Activated CD4-positive, alpha-beta memory T cell treated with anti-CD3 and anti-CD28 coated beads for 36 hours (primary cell): ENCODE measurements at regions of chr12 and their contacts with region 1.

Region 1: DNA sequence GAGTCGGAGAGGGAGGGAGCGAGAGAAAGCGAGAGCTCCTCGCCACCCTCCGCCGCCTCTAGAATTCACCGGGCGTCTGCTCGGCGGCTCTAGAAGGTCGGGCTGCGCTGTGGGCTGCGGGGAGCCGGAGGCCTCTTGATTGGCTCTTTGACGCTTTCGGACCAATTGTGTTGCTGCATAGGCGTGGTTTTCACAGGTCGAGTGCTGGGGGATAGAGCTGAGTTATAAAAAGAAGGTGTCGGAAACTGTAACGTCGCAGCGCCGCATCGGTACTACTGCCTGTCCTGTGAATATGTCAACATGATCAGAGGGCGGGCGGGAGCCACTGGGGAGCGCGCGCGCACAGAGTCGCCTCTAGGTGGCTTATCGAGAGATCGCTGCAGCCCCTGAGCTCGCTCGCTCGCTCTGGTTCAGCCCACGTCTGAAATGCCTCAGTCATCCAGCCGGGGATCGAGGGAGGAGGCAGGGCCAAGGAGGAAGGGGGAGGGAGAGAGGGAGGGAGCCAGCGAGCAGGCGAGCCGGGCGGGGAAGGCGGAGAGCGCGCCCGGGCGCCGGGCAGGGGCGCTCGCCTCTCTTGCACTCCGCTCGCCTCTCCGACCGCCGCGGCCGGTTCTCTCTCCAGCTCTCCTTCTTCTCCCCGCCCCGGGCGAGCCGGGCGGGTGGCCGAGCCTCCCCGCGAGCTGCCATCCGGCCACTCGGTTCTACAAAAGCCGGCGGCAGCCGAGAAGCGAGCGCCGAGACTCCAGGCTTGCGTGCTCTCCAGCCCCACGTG is at the start of gene TBX3:
- DNase-seq: peak; percentile 75
- H3K4me3 Mint-ChIP-seq: peak within 1 kb of the TSS; percentile 66
- H3K27ac Mint-ChIP-seq: no peak within 1 kb of the TSS
- H3K4me1 Mint-ChIP-seq: peaks cover 34% of the 10 kb centered on the region
- H3K27me3 Mint-ChIP-seq: peaks cover 91% of the 10 kb centered on the region
- total RNA-seq, gene TBX3: not detected

Region 2: DNA sequence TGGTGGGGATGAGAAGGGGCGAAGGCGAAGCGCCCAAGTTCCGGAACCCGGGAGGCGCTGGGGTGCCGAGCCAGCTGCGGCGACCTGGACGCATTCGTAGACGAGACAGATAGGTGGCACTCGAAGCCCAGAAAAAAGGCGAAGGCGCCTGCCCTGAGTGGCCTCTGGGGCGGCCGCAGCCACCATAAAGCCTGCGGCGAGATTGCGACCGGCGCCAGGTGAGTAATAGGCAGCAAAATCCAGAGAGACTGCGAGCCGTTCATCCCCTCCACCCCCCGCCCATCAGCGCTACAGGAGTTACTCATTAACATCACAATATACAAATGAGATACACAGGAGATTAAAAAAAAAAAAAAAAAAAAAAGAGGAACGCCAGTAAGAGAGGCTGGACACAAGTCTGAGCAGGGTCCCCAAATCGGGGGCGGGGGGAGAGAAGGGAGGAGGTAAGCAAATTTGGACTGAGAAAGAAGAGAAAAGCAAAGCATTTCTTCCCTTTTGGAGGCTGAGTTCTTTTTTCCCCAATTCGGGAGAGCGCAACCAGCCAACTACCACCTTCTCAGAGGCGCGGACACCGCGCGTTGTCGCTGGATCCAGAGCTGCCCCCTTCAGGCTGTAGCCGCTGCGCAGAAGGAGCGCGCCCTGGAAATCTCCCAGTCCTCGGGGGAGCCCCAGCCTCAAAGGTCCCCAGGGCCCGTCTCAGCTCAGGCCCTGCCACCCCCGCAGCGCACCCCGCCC is 16.0 kb before region 1 on chr12:
- CTCF ChIA-PET with region 1: interaction called, 3 read pairs
- POLR2A ChIA-PET with region 1: no interaction called
- intact Hi-C with region 1: loop called (anchors 2 kb)
- DNase-seq: peak; percentile 53
- H3K4me3 Mint-ChIP-seq: no peak overlapping the region
- H3K27ac Mint-ChIP-seq: no peak overlapping the region
- H3K4me1 Mint-ChIP-seq: peaks cover 5% of the 10 kb centered on the region
- H3K27me3 Mint-ChIP-seq: peaks cover 73% of the 10 kb centered on the region

Region 3: DNA sequence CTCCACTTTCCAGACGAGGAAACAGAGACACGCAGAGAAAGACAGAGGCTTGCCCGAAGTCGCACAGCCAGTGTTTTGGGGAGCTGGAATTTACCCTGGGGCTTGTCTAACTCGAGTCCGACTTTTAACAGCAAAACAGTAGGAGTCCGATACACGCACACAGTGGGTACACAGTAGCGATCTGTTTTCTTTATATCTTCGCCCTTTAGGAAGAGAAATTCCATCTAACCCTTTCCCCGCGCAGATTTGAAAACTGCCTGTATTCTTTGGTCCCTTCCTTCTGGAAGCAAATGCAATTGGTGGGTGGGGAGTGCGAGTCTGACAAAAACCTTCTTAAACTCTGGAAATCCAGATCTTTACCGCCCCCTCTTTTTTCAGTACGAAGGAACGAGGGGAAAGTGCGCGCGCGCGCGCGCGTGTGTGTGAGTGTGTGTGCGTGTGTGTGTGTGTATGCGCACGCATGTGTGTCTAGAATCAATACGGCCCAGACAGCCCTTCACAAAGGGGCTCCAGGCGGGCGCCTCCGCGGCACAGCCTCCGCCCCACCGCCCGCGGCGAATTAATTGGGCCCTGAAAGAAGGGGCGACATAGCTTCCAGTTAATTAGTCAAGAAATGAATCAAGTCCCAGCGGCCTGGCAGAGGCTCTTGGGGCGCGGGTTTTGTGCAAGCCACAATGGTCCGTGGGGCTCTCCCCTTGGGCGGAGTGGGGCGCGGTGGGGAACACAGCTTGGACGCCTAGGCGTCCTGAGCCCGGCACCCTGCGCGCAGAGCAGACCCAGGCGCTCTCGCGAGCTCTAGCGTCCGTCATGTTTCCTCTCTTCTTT is 13.7 kb after region 1 on chr12:
- CTCF ChIA-PET with region 1: no interaction called
- POLR2A ChIA-PET with region 1: no interaction called
- intact Hi-C with region 1: no loop called
- DNase-seq: no peak
- H3K4me3 Mint-ChIP-seq: no peak overlapping the region
- H3K27ac Mint-ChIP-seq: no peak overlapping the region
- H3K4me1 Mint-ChIP-seq: no peaks in the 10 kb centered on the region
- H3K27me3 Mint-ChIP-seq: peaks cover 82% of the 10 kb centered on the region

Region 4: DNA sequence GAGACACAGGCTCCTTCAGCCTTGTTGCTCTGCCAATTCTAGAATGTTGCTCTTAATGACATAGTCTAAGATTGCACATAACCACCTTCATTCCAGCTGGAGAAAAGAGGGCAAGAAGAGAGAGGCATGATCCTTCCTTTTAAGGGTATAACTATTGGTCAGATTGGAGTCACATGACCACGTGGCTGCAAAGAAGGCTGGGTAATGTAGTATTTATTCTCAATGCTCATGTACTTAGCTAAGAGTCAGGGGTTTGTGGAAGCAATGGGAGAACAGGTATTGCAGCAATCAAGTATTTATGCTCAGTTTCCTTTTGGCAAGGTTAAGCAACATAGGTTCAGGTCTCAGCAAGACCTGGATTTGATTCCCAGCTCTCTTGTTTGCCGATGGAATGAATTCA is 298.5 kb after region 1 on chr12:
- CTCF ChIA-PET with region 1: no interaction called
- POLR2A ChIA-PET with region 1: no interaction called
- intact Hi-C with region 1: no loop called
- DNase-seq: no peak
- H3K4me3 Mint-ChIP-seq: no peak overlapping the region
- H3K27ac Mint-ChIP-seq: no peak overlapping the region
- H3K4me1 Mint-ChIP-seq: no peaks in the 10 kb centered on the region
- H3K27me3 Mint-ChIP-seq: no peaks in the 10 kb centered on the region